Activated CD4-positive, alpha-beta memory T cell treated with anti-CD3 and anti-CD28 coated beads for 36 hours (primary cell): ENCODE measurements at regions of chr2 and their contacts with region 1.

Region 1: DNA sequence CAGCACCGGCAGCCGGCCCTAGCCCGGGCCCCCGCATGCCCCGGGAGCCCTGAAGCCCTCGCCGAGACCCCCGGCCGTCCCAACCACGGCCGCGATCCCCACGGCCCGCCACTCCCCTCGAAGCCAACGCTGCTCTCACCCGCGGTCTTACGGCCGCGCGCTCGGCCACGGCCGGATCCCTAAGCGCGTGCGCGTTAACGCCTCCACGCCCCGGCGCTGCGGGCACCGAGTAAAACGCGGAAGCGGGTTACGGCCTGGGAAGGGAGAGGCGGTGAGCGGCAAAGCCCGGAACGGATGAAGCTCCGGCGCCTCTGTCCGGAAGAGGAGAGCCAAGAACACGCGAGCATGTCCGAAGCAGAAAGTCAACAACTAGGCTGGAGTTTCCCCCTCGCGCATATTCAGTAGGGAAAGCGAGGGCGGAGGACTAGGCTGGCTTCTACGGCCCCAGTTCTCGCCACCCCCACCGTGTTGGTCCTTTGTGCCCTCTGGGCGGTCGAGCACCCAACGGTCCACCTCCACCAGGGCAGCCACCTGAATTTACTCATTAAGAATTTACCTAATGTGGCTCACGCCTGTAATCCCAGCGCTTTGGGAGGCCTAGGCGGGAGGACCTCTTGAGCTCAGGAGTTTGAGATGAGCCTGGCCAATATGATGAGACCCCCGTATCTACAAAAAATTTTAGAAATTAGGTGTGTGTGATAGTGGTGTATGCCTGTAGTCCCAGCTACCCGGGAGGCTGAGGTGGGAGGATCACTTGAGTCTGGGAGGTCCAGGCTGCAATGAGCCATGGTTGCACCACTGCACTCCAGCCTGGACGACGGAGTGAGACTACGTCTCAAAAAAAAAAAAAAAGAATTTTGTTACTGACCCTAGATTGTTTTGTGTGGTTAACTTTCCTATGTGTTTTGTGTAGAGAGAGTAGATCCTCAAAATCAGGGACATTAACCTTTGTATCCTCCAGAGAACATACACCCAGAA is at the start of gene KANSL3:
- DNase-seq: peak; percentile 93
- H3K4me3 Mint-ChIP-seq: peak within 1 kb of the TSS; percentile 97
- H3K27ac Mint-ChIP-seq: peak within 1 kb of the TSS; percentile 90
- H3K4me1 Mint-ChIP-seq: peaks cover 28% of the 10 kb centered on the region
- H3K27me3 Mint-ChIP-seq: no peaks in the 10 kb centered on the region
- total RNA-seq, gene KANSL3: 33.7 to 39.4 TPM

Region 2: DNA sequence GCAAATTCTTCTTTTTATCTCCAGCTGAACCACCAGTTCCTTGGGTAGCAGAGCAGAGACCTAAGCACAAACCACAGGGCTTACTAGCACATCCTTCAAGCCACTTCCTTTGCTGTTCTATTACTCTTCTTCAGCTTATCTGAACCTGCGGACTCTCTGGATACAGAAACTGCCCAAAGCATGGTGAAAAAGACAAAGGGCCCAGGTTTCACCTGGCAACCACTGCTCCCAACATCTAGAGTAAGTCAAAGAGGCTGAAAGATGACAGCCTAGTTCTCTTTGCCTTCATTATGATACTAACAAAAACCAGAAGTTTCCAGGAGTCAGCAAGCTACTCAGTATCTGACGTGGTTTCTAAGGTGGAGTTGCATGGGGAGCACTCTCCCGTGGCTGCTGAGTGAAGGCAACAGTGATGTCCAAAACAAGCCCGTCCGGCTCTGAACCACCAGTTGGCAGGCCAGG is 43.7 kb before region 1 on chr2:
- CTCF ChIA-PET with region 1: no interaction called
- POLR2A ChIA-PET with region 1: interaction called, 3 read pairs
- intact Hi-C with region 1: loop called (anchors 5 kb)
- DNase-seq: peak; percentile 53
- H3K4me3 Mint-ChIP-seq: no peak overlapping the region
- H3K27ac Mint-ChIP-seq: peak overlapping the region; percentile 96
- H3K4me1 Mint-ChIP-seq: peaks cover 41% of the 10 kb centered on the region
- H3K27me3 Mint-ChIP-seq: no peaks in the 10 kb centered on the region

Region 3: DNA sequence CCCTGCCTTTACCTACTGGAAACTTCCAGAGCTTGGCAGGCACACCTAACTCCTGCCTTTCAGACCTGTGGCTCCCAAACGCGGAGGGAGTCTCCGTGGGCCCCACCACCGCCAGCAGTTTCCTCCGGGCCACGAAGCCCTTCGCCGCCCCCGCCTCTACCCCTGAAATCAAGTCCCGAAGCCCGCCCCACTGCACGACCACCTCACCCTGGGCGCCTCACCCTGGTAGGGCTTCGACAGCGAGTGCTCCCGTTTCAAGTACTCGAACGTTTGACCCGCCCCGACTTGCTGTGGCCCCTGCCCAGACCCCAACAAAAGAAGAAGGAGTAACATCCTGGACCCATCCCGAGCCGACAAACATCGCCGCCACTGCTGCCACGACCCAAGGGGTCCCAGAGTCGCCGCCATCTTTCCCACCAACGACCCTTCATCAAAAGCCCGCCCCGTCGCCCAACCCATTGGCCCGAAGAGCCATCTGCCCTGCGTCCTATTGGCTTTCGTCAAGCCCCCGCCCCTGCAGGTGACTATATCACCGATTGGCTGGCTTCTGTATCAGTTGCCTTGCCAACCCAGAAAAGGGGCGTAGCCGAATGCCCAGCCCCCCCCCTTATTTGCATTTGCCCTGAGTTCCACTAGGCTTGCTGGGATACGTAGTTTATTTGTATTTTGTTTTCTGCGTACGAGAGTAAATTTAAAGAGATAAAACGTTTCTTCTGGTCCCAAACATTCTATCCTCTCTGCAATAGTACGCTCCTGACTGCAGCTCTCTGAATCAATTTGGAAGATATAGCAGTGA is 101.4 kb after region 1 on chr2 and contains the start of gene LMAN2L:
- CTCF ChIA-PET with region 1: no interaction called
- POLR2A ChIA-PET with region 1: no interaction called
- intact Hi-C with region 1: loop called (anchors 1 kb)
- DNase-seq: peak; percentile 99
- H3K4me3 Mint-ChIP-seq: peak within 1 kb of the TSS; percentile 92
- H3K27ac Mint-ChIP-seq: peak within 1 kb of the TSS; percentile 52
- H3K4me1 Mint-ChIP-seq: peaks cover 35% of the 10 kb centered on the region
- H3K27me3 Mint-ChIP-seq: no peaks in the 10 kb centered on the region
- total RNA-seq, gene LMAN2L: 5.7 to 6.1 TPM